ENCODE measurements at regions of chr6 and their contacts with region 1.

Region 1: GRCh38 chr6:31597006-31597405 is 4.2 kb upstream of the NCR3 start:
- DNase-seq: no peak
- ATAC-seq: peak in 6 of 8 donors; percentile 43 to 71 (median 60)
- H3K4me3 ChIP-seq: no peak overlapping the region
- H3K27ac ChIP-seq: no peak overlapping the region
- H3K4me1 ChIP-seq: peaks cover 0 to 10% (median 0%) of the 10 kb centered on the region in 9 donors
- H3K27me3 ChIP-seq: no peaks in the 10 kb centered on the region
- CTCF ChIP-seq: peak in 7 of 9 donors; percentile 26 to 53 (median 46)

Region 2: DNA sequence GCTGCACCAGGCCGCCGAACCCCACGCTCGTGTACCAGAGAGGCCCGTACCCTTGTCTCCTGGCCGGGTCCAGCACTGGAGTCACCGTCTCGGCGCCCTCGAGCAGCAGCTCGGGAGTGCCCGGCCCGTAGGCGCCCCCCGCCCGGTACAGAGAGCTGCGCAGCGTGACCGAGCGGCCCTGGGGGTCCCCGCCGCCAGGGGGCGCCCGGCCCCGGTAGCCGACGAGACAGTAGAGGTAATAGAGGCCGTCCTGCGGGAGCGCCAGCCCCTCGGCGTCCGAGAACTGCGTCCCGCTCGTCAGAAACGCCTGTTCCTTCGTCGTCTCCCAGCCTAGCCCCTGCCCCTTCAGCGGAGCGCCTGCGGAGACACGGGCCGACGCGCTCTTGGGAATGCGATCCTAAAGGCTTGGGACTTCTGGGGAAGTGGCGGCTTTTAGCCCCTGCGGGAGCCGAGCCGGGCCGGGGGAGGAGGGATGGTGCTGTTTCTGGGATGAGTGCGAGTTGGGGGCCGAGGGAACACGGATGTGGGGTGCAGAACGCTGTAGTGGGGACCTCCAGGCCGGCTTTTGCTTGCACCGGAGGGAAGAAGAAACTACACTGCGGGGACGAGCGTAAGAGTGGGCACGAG is 16.1 kb before region 1 on chr6:
- intact Hi-C with region 1: loop called in 4 of 10 experiments (anchors 1 to 2 kb)
- DNase-seq: peak; percentile 89 to 93
- ATAC-seq: peak; percentile 97 to 99 (median 98)
- H3K4me3 ChIP-seq: peak overlapping the region; percentile 36 to 97 (median 82)
- H3K27ac ChIP-seq: peak overlapping the region; percentile 41 to 94 (median 86)
- H3K4me1 ChIP-seq: peaks cover 0 to 82% (median 16%) of the 10 kb centered on the region in 9 donors
- H3K27me3 ChIP-seq: no peaks in the 10 kb centered on the region
- CTCF ChIP-seq: peak; percentile 96 to 100 (median 99)

Region 3: DNA sequence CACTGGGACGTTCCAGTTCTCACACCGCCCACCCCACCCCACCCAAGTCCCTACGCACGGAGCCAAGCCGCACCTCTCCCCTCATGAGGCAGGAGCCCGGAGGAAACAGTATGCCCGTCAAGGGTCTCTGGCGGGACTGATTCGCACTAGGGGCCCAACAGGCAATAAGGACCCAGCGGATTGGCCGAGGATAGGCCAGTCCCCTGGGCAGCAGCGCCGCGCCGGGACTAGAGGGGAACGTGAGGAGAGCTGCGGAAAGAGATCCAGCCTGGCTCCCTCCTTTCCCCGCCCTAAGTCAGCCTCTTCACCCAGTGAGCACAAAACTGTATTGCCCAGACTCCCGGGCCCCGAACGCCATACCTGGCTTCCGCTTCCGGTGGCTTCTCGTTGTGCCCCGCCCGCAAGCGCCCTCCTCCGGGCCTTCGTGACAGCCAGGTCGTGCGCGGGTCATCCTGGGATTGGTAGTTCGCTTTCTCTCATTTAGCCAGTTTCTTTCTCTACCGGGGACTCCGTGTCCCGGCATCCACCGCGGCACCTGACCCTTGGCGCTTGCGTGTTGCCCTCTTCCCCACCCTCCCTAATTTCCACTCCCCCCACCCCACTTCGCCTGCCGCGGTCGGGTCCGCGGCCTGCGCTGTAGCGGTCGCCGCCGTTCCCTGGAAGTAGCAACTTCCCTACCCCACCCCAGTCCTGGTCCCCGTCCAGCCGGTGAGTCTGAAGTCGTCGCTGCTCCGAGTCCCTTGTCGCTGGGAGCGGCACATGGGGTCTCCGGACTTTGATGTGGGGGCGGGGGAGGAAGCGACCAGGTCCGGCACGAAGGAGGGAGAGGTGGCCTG is 68.7 kb after region 1 on chr6 and contains the start of gene CSNK2B:
- intact Hi-C with region 1: no loop called
- DNase-seq: peak; percentile 98 to 99
- ATAC-seq: peak; percentile 89 to 94 (median 92)
- H3K4me3 ChIP-seq: peak within 1 kb of the TSS; percentile 59 to 98 (median 82)
- H3K27ac ChIP-seq: peak within 1 kb of the TSS; percentile 70 to 98 (median 96)
- H3K4me1 ChIP-seq: peaks cover 14 to 62% (median 52%) of the 10 kb centered on the region in 9 donors
- H3K27me3 ChIP-seq: no peaks in the 10 kb centered on the region
- CTCF ChIP-seq: peak in 5 of 9 donors; percentile 12 to 42 (median 27)
- total RNA-seq, gene CSNK2B: 101 to 153 (median 115) TPM

Region 4: GRCh38 chr6:32086661-32087573 is 489.9 kb after region 1 on chr6:
- intact Hi-C with region 1: no loop called
- DNase-seq: no peak
- ATAC-seq: peak in 5 of 8 donors; percentile 1 to 16 (median 10)
- H3K4me3 ChIP-seq: peak overlapping the region in 8 of 10 donors; percentile 2 to 39 (median 20)
- H3K27ac ChIP-seq: peak overlapping the region; percentile 34 to 87 (median 78)
- H3K4me1 ChIP-seq: peaks cover 0 to 41% (median 25%) of the 10 kb centered on the region in 9 donors
- H3K27me3 ChIP-seq: peaks cover 0 to 27% (median 3%) of the 10 kb centered on the region in 7 donors
- CTCF ChIP-seq: no peak

Measured in heart right ventricle (tissue), 16 donors.